A673 (cell line): ENCODE measurements at regions of chr16 and their contacts with region 1.

Region 1: GRCh38 chr16:8768692-8769091 is 28.7 kb downstream of the TMEM186 start:
- DNase-seq: no peak
- H3K4me3 ChIP-seq: no peak overlapping the region
- H3K27ac ChIP-seq: no peak overlapping the region
- H3K4me1 ChIP-seq: no peaks in the 10 kb centered on the region
- H3K27me3 ChIP-seq: no peaks in the 10 kb centered on the region
- CTCF ChIP-seq: no peak

Region 2: GRCh38 chr16:9008601-9009260 is 240.0 kb after region 1 on chr16:
- CTCF ChIA-PET with region 1: no interaction called
- POLR2A ChIA-PET with region 1: interaction called, 11 read pairs
- intact Hi-C with region 1: no loop called
- DNase-seq: peak; percentile 80
- H3K4me3 ChIP-seq: peak overlapping the region; percentile 33
- H3K27ac ChIP-seq: no peak overlapping the region
- H3K4me1 ChIP-seq: no peaks in the 10 kb centered on the region
- H3K27me3 ChIP-seq: no peaks in the 10 kb centered on the region
- CTCF ChIP-seq: peak; percentile 90

Region 3: GRCh38 chr16:10441726-10442125 is 1673.0 kb after region 1 on chr16:
- CTCF ChIA-PET with region 1: no interaction called
- POLR2A ChIA-PET with region 1: no interaction called
- intact Hi-C with region 1: no loop called
- DNase-seq: no peak
- H3K4me3 ChIP-seq: no peak overlapping the region
- H3K27ac ChIP-seq: no peak overlapping the region
- H3K4me1 ChIP-seq: no peaks in the 10 kb centered on the region
- H3K27me3 ChIP-seq: no peaks in the 10 kb centered on the region
- CTCF ChIP-seq: no peak